ENCODE measurements at regions of chr10 and their contacts with region 1.

Region 1: GRCh38 chr10:118423800-118424479 is 81.8 kb upstream of the FAM204A start:
- DNase-seq: peak; percentile 64
- H3K4me3 ChIP-seq: peak overlapping the region in 1 of 2 experiments; percentile 52; a peak in 1 of 4 replicates
- H3K27ac ChIP-seq: no peak overlapping the region
- H3K4me1 ChIP-seq: no peaks in the 10 kb centered on the region; a peak in 1 of 4 replicates
- H3K27me3 ChIP-seq: no peaks in the 10 kb centered on the region; the same call in 1 of the 2 replicates
- CTCF ChIP-seq: peak; percentile 74
- EP300 ChIP-seq: no peak
- RAD21 ChIP-seq: peak; percentile 81

Region 2: GRCh38 chr10:117503244-117504205 is 920.4 kb before region 1 on chr10:
- CTCF ChIA-PET with region 1: interaction called, 11 read pairs
- POLR2A ChIA-PET with region 1: no interaction called
- DNase-seq: peak; percentile 81
- H3K4me3 ChIP-seq: no peak overlapping the region; a peak in 1 of 4 replicates
- H3K27ac ChIP-seq: peak overlapping the region in 1 of 2 experiments; percentile 92; a peak in 2 of 4 replicates
- H3K4me1 ChIP-seq: peaks cover 0 to 26% of the 10 kb centered on the region in 2 experiments; a peak in 3 of 4 replicates
- H3K27me3 ChIP-seq: no peaks in the 10 kb centered on the region
- CTCF ChIP-seq: no peak
- EP300 ChIP-seq: peak in 1 of 2 experiments; percentile 80; a peak in 2 of 4 replicates
- RAD21 ChIP-seq: peak; percentile 52

Region 3: DNA sequence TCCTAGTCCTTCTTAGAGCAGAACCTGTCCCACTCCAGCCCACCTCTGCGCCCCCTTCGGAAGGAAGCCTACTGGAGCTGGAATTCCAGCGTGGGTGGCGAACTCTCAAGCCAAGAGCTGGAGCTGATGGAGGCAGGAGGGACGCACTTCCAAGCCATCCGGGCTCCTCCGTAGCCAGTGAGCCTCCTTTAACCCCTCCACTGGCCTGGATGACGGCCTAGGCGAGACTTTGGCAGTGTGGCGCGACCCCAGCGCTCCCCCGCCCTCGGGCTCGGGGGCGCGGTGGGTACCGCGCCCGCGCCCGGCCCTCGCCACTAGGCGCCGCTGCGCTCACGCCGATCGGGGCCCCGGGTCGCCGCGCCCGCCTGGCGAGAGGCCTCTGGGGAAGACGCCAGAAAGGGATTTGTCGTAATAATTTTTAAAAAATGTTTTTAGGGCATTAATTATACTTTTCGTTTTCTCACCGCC is 886.5 kb before region 1 on chr10:
- CTCF ChIA-PET with region 1: interaction called, 18 read pairs
- POLR2A ChIA-PET with region 1: no interaction called
- DNase-seq: peak; percentile 93
- H3K4me3 ChIP-seq: peak overlapping the region in 1 of 2 experiments; percentile 37; a peak in 1 of 4 replicates
- H3K27ac ChIP-seq: no peak overlapping the region
- H3K4me1 ChIP-seq: peaks cover 0 to 21% of the 10 kb centered on the region in 2 experiments; a peak in 2 of 4 replicates
- H3K27me3 ChIP-seq: peaks cover 89% of the 10 kb centered on the region
- CTCF ChIP-seq: peak; percentile 65
- EP300 ChIP-seq: no peak
- RAD21 ChIP-seq: peak; percentile 72

Region 4: DNA sequence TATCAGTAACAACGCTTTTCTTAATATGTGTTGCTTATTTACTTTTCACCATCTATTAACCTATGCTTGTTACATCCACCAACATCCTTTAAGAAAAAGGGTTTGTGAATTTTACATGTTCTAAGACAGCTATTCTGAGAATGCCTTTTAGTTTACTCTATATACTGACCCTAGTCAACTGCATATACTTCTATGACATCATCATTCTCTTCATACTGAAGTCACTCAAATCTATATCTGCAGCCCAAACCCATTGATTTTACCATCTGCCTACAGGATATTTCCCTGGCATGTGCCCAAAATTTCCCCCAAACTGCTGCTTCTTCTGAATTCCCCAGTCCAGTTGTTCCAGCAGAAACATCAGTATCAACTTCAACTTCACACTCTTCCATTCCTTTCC is 12.8 kb after region 1 on chr10:
- CTCF ChIA-PET with region 1: interaction called, 20 read pairs
- POLR2A ChIA-PET with region 1: no interaction called
- DNase-seq: no peak
- H3K4me3 ChIP-seq: no peak overlapping the region
- H3K27ac ChIP-seq: no peak overlapping the region
- H3K4me1 ChIP-seq: no peaks in the 10 kb centered on the region
- H3K27me3 ChIP-seq: no peaks in the 10 kb centered on the region
- CTCF ChIP-seq: no peak
- EP300 ChIP-seq: no peak
- RAD21 ChIP-seq: no peak